GM23248 (cell line): ENCODE measurements at regions of chr22 and their contacts with region 1.

Region 1: DNA sequence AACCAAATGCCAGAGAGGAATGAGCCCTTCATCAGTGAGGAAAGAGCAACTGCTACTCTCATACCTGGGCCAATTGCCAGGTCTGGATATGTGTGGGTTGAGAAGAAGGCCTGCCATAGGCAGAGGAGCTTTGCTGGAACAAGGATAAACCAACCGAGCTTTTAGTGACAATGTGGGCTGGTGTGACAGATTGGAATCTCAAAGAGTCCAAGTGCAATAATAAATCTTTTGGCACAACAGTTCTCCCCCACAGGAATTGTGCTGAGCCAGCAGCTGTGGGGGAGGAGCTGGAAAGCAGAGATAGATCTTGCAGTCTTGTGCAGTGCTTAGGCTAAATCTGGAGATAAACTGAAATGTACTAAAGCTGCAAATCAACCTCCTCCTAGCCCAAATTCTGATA is 79.4 kb upstream of the ISX start:
- DNase-seq: no peak
- H3K4me3 ChIP-seq: no peak overlapping the region
- H3K27ac ChIP-seq: no peak overlapping the region
- H3K4me1 ChIP-seq: no peaks in the 10 kb centered on the region
- H3K27me3 ChIP-seq: no peaks in the 10 kb centered on the region

Region 2: DNA sequence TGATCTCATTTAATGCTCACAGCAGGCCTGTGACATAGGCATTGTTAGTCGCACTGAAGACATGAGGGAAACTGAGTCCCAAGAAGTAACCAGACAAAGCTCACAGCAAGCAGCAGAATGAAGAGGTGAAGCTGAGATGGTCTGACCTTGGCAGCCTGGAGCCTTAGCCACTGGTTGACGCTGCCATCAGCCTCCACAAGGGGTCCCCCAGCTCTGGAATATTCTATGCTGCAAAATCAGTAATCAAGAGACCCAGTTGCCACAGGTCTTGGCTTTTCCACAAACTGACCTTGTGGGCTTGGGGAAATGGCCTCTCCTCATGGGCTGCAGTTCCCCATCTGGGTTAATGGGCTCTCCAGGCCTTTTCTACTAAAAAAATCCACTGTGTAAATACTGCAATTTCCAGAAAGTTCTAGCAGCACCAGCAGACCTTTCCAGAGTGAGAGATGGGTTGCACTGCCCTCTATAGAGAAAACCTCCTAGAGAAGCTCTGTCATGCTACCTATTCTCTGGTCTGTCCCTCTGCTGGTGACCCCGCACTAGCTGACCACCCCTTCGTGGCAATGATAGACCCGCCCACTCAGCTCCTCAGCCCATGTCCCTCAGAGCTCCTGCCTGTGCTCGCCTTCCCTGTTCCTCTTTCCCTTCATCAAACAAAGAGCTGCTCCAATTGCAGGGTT is 56.9 kb after region 1 on chr22:
- in situ Hi-C with region 1: loop called (anchors 10 kb)
- DNase-seq: peak; percentile 16
- H3K4me3 ChIP-seq: no peak overlapping the region
- H3K27ac ChIP-seq: no peak overlapping the region
- H3K4me1 ChIP-seq: no peaks in the 10 kb centered on the region
- H3K27me3 ChIP-seq: no peaks in the 10 kb centered on the region

Region 3: GRCh38 chr22:35376728-35377472 is 390.4 kb after region 1 on chr22:
- in situ Hi-C with region 1: no loop called
- DNase-seq: peak; percentile 99
- H3K4me3 ChIP-seq: peak overlapping the region; percentile 40; the same call in 1 of the 2 replicates
- H3K27ac ChIP-seq: peak overlapping the region; percentile 90
- H3K4me1 ChIP-seq: peaks cover 43% of the 10 kb centered on the region
- H3K27me3 ChIP-seq: no peaks in the 10 kb centered on the region

Region 4: GRCh38 chr22:35477911-35478582 is 491.5 kb after region 1 on chr22:
- in situ Hi-C with region 1: no loop called
- DNase-seq: peak; percentile 70
- H3K4me3 ChIP-seq: no peak overlapping the region
- H3K27ac ChIP-seq: no peak overlapping the region
- H3K4me1 ChIP-seq: peaks cover 22% of the 10 kb centered on the region
- H3K27me3 ChIP-seq: no peaks in the 10 kb centered on the region